ENCODE measurements at regions of chr3 and their contacts with region 1.

Region 1: GRCh38 chr3:102466001-102466400 is 31.2 kb downstream of the ZPLD1 start:
- DNase-seq: no peak
- H3K4me3 Mint-ChIP-seq: no peak overlapping the region
- H3K27ac Mint-ChIP-seq: no peak overlapping the region
- H3K4me1 Mint-ChIP-seq: peaks cover under 1% of the 10 kb centered on the region
- H3K27me3 Mint-ChIP-seq: no peaks in the 10 kb centered on the region
- CTCF ChIP-seq: no peak

Region 2: DNA sequence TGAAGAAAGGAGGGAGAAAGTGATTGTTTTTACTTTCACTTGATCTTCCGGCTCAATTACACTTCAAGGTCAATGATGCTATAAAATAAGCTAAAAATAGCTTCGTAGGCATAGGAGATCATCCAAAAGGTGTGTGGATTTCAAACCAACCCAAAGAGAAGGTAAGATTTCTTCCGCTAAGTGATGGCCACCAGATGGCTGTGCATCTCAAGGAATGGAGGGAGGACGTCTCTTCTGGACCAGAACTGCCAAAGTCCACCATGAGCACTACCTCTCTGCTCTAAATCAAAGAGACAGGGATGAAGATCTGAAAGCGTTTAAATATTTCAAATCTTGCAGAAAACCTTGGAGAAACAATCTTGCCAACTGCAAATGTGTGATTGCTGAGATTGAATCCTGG is 230.3 kb before region 1 on chr3:
- CTCF ChIA-PET with region 1: no interaction called
- intact Hi-C with region 1: loop called (anchors 5 kb)
- DNase-seq: no peak
- H3K4me3 Mint-ChIP-seq: no peak overlapping the region
- H3K27ac Mint-ChIP-seq: no peak overlapping the region
- H3K4me1 Mint-ChIP-seq: no peaks in the 10 kb centered on the region
- H3K27me3 Mint-ChIP-seq: no peaks in the 10 kb centered on the region
- CTCF ChIP-seq: no peak

Region 3: GRCh38 chr3:102536456-102536855 is 70.5 kb after region 1 on chr3:
- CTCF ChIA-PET with region 1: interaction called, 4 read pairs
- intact Hi-C with region 1: loop called (anchors 1 kb)
- DNase-seq: no peak
- H3K4me3 Mint-ChIP-seq: no peak overlapping the region
- H3K27ac Mint-ChIP-seq: no peak overlapping the region
- H3K4me1 Mint-ChIP-seq: no peaks in the 10 kb centered on the region
- H3K27me3 Mint-ChIP-seq: no peaks in the 10 kb centered on the region
- CTCF ChIP-seq: no peak

Region 4: GRCh38 chr3:102593812-102594602 is 128.0 kb after region 1 on chr3:
- CTCF ChIA-PET with region 1: no interaction called
- intact Hi-C with region 1: no loop called
- DNase-seq: no peak
- H3K4me3 Mint-ChIP-seq: no peak overlapping the region
- H3K27ac Mint-ChIP-seq: no peak overlapping the region
- H3K4me1 Mint-ChIP-seq: no peaks in the 10 kb centered on the region
- H3K27me3 Mint-ChIP-seq: no peaks in the 10 kb centered on the region
- CTCF ChIP-seq: no peak

Measured in Calu3 (cell line).